ENCODE measurements at regions of chr2 and their contacts with region 1.

Region 1: DNA sequence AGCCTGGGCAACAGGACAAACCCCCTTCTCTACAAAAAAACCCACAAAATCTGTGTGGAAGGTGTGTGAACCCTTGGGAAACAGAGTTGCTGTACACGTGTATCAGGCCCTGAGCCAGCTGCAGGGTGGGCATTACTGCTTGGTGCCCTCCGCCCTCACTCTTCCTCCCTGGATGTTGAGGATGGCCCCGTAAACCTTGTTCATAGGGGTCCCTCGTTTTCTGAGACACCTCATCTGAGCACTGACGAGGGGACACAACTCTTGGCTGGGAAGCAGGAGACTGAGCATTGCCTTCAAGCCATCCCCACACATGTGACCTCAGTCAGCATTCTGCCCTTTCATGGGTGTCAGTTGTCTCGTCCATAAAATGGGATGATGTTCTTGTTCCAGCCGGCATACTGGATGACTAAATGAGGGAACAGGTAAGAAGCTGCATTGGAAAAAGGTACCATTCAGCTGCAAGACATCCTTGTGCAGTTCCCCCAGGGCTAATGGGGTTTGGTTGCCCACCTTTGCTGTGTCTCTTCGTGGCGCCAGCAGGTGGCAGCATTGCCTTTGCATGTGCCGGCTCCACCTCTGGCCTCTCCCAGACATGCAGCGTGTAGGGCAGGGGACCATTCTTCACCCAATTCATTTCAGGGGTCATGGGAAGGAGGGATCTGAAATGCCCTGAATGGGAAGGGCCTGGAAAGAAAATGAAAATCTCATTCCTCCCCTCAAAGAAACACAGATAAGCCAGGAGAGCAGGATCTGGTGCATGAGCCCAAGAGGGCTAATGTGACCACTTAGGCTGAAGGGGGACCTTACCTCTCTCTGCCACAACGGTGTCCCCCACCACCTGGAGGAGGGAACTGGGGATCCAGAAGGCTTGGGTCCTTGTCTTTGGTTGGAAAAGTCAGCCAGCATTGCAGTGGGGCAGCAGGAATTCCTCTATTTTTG is 36.4 kb upstream of the HAAO start:
- DNase-seq: peak; percentile 66
- ATAC-seq: peak; percentile 94
- H3K4me3 ChIP-seq: no peak overlapping the region
- H3K27ac ChIP-seq: no peak overlapping the region
- H3K4me1 ChIP-seq: peaks cover 31% of the 10 kb centered on the region
- H3K27me3 ChIP-seq: peaks cover 0 to 22% of the 10 kb centered on the region in 2 experiments; a peak in 3 of 5 replicates
- CTCF ChIP-seq: peak; percentile 99
- EP300 ChIP-seq: no peak
- POLR2A ChIP-seq: no peak
- RAD21 ChIP-seq: peak; percentile 95

Region 2: DNA sequence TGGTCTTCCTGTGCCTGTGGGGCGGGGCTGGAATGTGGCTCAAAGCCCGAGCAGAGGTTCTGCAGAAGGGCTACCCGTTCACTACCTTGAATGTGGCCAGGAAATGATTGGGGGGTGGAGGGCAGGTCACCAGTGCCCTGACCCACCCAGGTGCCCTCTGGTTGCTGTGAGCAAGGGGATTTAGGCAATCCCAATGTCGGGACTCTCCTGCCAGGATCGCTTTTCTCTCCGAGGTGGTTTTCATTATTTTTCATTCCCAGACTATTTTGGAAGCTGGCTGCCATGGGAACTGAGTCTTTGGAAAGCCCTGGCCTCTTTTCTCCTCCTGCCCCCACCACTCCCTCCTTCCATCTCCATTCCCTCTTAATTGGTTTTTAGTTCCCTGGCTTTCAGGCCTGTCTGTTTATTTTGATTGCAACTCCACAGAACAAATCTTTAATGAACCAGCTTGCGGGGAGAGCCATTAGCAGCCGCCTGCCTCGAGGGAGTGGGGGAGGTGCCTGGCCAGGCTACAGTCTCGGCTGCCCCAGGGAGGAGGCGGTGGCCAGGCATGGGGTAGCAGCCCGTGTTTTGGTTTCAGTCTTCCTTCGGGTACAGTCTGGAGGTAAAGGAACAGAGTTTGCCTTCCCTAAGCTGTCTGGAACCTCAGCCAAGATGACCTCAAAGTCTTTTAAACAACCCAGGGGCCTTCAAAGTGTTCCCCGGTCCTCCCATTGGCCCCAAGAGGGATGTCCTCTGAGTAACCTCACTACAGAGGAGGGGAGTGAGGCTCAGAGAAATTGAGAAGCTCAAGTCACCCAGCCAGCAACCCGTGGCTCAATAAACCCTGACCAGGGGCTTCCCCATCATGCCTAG is 78.0 kb after region 1 on chr2:
- CTCF ChIA-PET with region 1: no interaction called
- POLR2A ChIA-PET with region 1: no interaction called
- in situ Hi-C with region 1: no loop called
- intact Hi-C with region 1: loop called (anchors 5 kb)
- DNase-seq: no peak
- ATAC-seq: peak; percentile 74
- H3K4me3 ChIP-seq: peak overlapping the region; percentile 49 to 62 (median 51)
- H3K27ac ChIP-seq: no peak overlapping the region
- H3K4me1 ChIP-seq: peaks cover 41% of the 10 kb centered on the region
- H3K27me3 ChIP-seq: peaks cover 9 to 69% of the 10 kb centered on the region in 2 experiments; a peak in 4 of 5 replicates
- CTCF ChIP-seq: no peak
- EP300 ChIP-seq: no peak
- POLR2A ChIP-seq: no peak
- RAD21 ChIP-seq: no peak

Region 3: DNA sequence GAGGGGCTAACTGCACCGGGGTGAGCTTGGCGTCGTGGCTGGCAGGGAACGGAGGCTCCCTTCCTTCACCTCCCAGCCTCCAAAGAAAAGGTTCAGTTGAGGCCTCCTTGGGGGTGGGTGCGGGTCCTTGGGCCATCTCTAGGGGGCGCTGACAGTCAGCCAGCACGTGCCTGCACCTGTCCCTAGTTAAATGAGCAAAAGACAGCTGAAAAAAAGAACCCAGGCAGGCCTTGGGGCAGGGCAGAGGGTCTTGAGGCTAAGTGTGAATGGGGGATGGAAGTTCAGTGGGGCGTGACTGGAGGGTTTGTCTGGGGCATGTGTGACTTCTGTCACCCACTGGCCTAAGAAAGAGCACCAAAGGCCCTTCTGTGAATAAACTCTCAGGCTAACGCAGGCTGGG is 341.2 kb after region 1 on chr2:
- CTCF ChIA-PET with region 1: no interaction called
- POLR2A ChIA-PET with region 1: no interaction called
- in situ Hi-C with region 1: no loop called
- intact Hi-C with region 1: loop called (anchors 5 kb)
- DNase-seq: no peak
- ATAC-seq: peak; percentile 40
- H3K4me3 ChIP-seq: no peak overlapping the region
- H3K27ac ChIP-seq: no peak overlapping the region
- H3K4me1 ChIP-seq: peaks cover 72% of the 10 kb centered on the region
- H3K27me3 ChIP-seq: no peaks in the 10 kb centered on the region
- CTCF ChIP-seq: peak; percentile 85
- EP300 ChIP-seq: no peak
- POLR2A ChIP-seq: no peak
- RAD21 ChIP-seq: peak; percentile 61

Region 4: DNA sequence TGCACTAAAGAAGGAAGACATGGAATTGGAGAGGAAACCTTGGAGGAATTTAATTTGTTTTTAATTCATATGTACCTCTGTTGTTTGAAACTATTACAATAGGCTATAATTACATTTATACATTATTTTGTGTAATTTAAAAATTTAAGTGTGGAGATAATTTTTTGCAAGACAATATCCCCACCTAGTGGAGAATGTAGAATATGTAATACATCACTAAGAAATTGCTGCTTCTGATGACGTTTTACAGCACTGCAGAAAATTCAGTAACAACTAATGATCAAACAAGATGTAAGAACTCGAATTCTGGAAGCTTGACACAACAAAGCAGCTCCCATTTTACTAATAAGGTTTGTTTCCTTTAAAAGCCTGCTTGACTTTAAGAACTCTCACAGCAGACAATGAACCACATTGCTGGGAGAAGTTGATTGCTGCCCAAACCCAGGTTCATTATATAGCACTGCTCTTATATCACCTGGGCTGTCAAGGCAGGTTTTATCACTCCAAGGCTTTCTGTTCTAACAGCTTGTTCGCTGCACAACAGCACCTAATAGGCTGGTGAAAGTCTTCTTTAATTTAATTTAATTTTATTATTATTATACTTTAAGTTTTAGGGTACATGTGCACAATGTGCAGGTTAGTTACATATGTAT is 713.7 kb after region 1 on chr2:
- CTCF ChIA-PET with region 1: interaction called, 25 read pairs
- POLR2A ChIA-PET with region 1: no interaction called
- in situ Hi-C with region 1: no loop called
- intact Hi-C with region 1: loop called (anchors 1 kb)
- DNase-seq: peak; percentile 54
- ATAC-seq: no peak
- H3K4me3 ChIP-seq: no peak overlapping the region
- H3K27ac ChIP-seq: no peak overlapping the region
- H3K4me1 ChIP-seq: peaks cover 11% of the 10 kb centered on the region
- H3K27me3 ChIP-seq: no peaks in the 10 kb centered on the region
- CTCF ChIP-seq: peak; percentile 67
- EP300 ChIP-seq: no peak
- POLR2A ChIP-seq: no peak
- RAD21 ChIP-seq: 0 out of 2 replicates have a peak, but pooled peaks have one; percentile 23

Region 5: GRCh38 chr2:43611987-43612894 is 783.5 kb after region 1 on chr2:
- CTCF ChIA-PET with region 1: interaction called, 18 read pairs
- POLR2A ChIA-PET with region 1: no interaction called
- in situ Hi-C with region 1: no loop called
- intact Hi-C with region 1: loop called (anchors 2 kb)
- DNase-seq: peak; percentile 73
- ATAC-seq: peak; percentile 87
- H3K4me3 ChIP-seq: peak overlapping the region; percentile 24 to 59 (median 43); a peak in 5 of 6 replicates
- H3K27ac ChIP-seq: peak overlapping the region; percentile 21
- H3K4me1 ChIP-seq: peaks cover 48% of the 10 kb centered on the region
- H3K27me3 ChIP-seq: 0 out of 5 replicates have a peak, but pooled peaks cover 0 to 2% of the 10 kb centered on the region in 2 experiments
- CTCF ChIP-seq: peak; percentile 93
- EP300 ChIP-seq: no peak
- POLR2A ChIP-seq: no peak
- RAD21 ChIP-seq: peak; percentile 73

Measured in HepG2 (cell line).